Left colon (tissue), 2 donors: ENCODE measurements at regions of chr1 and their contacts with region 1.

Region 1: DNA sequence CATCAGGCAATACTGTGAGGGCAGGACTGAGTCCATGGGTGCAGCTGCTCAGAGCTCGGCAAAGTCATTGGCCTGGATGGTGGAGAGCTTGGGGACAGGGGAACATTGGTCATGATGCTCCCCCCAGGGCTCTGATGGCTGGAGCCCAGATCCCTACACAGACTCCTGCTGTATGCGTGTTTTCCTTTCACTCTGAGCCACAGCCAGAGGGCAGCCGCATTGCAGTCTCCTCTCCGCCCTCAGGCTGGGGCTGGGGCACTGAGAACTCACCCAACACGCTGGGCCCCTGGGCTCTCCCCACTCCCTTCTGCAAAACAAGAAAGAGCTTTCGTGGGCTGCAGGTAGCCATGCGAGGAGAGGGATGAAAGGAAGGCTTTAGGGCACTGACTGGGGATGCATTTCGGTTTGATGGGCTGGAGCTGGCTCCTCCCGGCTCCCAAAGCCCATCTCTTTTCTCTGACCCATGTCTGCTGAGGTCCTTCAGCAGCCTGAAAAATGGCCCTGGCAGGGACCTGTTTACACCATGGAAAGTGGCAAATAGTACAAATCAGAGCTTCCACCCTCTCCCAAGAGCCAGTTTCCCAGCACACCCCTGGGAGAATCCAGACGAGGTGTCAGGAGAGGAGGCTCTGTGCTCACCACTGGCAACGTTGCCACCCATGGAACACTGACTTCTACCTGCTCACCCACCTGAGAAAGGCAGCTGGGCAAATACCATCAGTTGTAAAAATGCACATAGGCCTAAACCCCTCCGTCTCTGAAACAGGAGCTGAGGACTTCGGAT is 43.8 kb downstream of the CAPN2 start:
- DNase-seq: no peak
- ATAC-seq: peak; percentile 17

Region 2: DNA sequence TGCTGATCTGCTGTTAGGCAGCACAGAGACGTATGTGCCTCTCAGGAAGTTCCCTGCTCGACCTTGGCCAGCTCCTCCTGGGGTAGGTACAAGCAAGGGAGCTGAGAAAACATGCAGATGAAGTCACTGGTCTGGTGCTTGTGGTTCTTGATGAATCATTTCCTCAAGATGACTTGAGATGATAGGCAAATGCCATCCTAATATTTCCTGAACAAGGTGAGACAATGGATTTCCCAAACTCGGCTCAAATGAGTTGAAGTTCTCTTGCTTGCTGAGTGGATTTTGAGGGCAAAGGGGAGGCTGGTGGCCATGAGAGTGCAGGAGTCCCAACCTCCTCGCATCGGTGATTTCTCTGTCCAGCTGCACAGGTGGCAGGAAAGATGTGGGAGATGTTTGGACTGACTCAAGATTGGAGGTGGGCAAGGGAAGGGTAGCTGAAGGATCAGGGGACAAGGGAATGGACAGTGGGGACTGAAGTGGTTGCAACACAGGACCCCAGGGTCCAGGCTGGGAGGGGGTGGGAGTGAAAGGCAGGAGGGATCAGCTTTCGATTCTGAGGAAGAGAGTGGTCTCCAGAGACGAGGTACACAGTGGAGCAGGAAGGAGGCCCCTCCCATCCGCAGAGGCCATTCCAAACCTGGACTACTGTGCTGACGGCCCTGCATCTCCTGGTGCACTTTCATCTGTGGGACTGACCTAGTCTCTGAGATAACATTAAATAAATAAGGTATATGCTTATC is 20.1 kb after region 1 on chr1:
- intact Hi-C with region 1: loop called in 1 of 2 experiments (anchors 2 kb)
- DNase-seq: no peak
- ATAC-seq: peak; percentile 26